Heart right ventricle (tissue), 16 donors: ENCODE measurements at regions of chr1 and their contacts with region 1.

Region 1: DNA sequence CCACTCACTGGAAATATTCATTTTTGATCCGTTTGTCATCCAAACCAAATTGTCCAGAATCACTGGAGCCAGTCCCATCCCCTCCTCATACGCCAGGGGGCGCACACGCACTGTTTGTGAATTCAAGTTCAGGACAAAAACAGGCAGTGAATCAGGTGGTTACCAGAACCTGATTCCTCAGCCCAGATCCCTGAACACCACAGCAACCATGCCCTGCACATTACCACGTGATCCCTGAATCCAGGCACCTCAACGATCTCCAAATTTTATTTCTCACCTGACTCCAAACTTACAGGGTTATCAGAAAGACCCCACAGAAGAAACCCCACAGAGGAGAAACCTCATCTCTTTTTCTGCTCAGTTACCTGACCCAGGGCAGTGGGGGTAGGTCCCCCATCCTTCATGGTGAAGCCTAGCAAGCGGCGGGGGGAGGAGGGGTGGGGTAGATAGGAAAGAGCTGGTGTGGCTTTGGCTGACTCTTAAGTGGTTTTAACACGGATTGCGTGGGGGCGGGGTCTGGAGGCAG is 1.4 kb upstream of the PTPRF start:
- DNase-seq: peak; percentile 80 to 82
- ATAC-seq: peak; percentile 41 to 85 (median 74)
- H3K4me3 ChIP-seq: no peak overlapping the region
- H3K27ac ChIP-seq: no peak overlapping the region
- H3K4me1 ChIP-seq: peaks cover 0 to 20% (median 11%) of the 10 kb centered on the region in 9 donors
- H3K27me3 ChIP-seq: peaks cover 0 to 38% (median 9%) of the 10 kb centered on the region in 7 donors
- CTCF ChIP-seq: peak; percentile 87 to 96 (median 94)

Region 2: GRCh38 chr1:43454266-43455011 is 74.8 kb before region 1 on chr1:
- intact Hi-C with region 1: no loop called
- DNase-seq: peak; percentile 56 to 80
- ATAC-seq: peak; percentile 79 to 92 (median 88)
- H3K4me3 ChIP-seq: peak overlapping the region; percentile 42 to 67 (median 58)
- H3K27ac ChIP-seq: peak overlapping the region; percentile 86 to 94 (median 90)
- H3K4me1 ChIP-seq: peaks cover 0 to 26% (median 16%) of the 10 kb centered on the region in 9 donors
- H3K27me3 ChIP-seq: no peaks in the 10 kb centered on the region
- CTCF ChIP-seq: peak in 2 of 9 donors; percentile 7 to 10

Region 3: DNA sequence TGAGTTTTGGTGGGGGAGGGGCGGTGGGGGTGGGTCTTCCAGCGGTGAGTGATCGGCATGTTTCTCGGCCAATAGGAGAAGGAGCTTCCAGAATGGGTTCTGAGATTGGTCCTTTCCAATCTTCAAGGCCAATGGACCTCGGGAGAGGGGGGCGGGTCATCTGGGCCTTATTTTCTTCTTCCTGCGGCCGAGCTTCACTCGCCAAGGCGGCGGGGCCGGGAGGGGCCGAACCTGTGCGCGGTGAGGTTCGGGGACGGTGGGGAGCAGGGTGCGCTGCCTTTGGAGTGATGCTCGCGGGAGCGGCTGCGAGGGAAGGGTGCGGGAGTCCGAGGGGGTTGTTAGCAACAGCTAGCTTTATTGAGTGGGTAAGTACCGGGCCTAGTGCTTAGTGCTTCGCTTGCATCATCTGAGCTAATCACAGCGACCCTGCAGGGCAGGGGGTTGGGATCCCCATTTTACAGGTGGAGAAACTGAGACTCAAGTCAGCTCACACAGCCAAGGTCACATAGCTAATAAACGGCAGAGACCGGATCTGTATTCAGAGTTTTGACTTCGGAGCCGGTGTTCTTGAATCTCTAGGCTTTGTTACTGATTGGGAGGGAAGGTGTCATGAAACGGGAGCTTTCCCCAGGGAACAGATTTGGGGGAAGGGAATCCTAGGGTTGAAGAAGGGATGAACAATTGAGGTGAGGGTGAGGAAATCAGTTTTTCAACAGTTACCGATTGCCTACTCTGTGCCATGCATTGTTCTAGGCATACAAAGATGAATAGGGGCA is 121.2 kb after region 1 on chr1:
- intact Hi-C with region 1: loop called (anchors 1 to 10 kb)
- DNase-seq: peak; percentile 88 to 99
- ATAC-seq: peak; percentile 88 to 94 (median 92)
- H3K4me3 ChIP-seq: peak overlapping the region; percentile 46 to 93 (median 78)
- H3K27ac ChIP-seq: peak overlapping the region; percentile 69 to 95 (median 90)
- H3K4me1 ChIP-seq: peaks cover 9 to 40% (median 19%) of the 10 kb centered on the region in 9 donors
- H3K27me3 ChIP-seq: peaks cover 0 to 1% (median 0%) of the 10 kb centered on the region in 7 donors
- CTCF ChIP-seq: no peak

Region 4: DNA sequence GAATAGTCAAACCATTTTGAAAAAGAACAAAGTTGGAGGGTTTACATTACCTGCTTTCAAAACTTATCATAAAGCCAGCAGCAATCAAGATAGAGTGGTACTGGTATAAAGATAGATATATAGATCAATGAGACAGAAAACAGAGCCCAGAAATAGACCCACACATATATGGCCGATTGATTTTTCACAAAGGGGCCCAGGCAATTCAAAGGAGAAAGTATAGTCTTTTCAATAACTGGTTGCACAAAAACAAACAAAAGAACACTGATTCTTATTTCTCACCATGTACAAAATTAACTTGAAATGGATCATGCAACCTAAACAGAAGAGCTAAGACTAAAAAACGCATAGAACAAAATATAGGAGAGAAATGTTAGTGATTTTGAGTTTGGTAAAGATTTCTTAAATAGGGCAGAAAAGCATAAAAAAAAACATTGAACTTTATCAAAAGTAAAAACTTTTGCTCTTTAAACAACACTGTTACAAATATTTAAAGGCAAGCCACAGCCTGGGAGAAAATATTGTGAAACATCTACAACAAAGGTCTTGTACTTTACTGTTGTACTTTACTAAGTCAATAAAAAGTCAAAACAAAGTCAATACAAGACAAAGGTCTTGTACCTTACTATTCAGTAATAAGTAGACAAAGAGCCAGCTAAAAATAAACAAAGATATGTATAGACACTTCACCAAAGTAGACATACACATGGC is 228.2 kb after region 1 on chr1:
- intact Hi-C with region 1: loop called in 3 of 10 experiments (anchors 5 to 10 kb)
- DNase-seq: no peak
- ATAC-seq: no peak
- H3K4me3 ChIP-seq: no peak overlapping the region
- H3K27ac ChIP-seq: no peak overlapping the region
- H3K4me1 ChIP-seq: peaks cover 0 to 5% (median 0%) of the 10 kb centered on the region in 9 donors
- H3K27me3 ChIP-seq: no peaks in the 10 kb centered on the region
- CTCF ChIP-seq: no peak

Region 5: GRCh38 chr1:43934101-43934985 is 405.1 kb after region 1 on chr1:
- intact Hi-C with region 1: loop called in 8 of 10 experiments (anchors 2 to 10 kb)
- DNase-seq: peak; percentile 44 to 55
- ATAC-seq: peak in 7 of 8 donors; percentile 46 to 75 (median 62)
- H3K4me3 ChIP-seq: peak overlapping the region in 4 of 10 donors; percentile 36 to 44 (median 42)
- H3K27ac ChIP-seq: peak overlapping the region in 1 of 10 donors; percentile 9
- H3K4me1 ChIP-seq: peaks cover 6 to 40% (median 23%) of the 10 kb centered on the region in 9 donors
- H3K27me3 ChIP-seq: peaks cover 0 to 41% (median 26%) of the 10 kb centered on the region in 7 donors
- CTCF ChIP-seq: peak; percentile 72 to 87 (median 78)

Region 6: GRCh38 chr1:44036409-44037139 is 507.3 kb after region 1 on chr1:
- intact Hi-C with region 1: loop called in 3 of 10 experiments (anchors 5 to 10 kb)
- DNase-seq: peak; percentile 44 to 60
- ATAC-seq: peak; percentile 53 to 76 (median 66)
- H3K4me3 ChIP-seq: no peak overlapping the region
- H3K27ac ChIP-seq: peak overlapping the region in 9 of 10 donors; percentile 3 to 74 (median 46)
- H3K4me1 ChIP-seq: peaks cover 6 to 38% (median 23%) of the 10 kb centered on the region in 9 donors
- H3K27me3 ChIP-seq: peaks cover 0 to 5% (median 0%) of the 10 kb centered on the region in 7 donors
- CTCF ChIP-seq: peak; percentile 50 to 88 (median 79)

Region 7: GRCh38 chr1:44049839-44050238 is 520.6 kb after region 1 on chr1:
- intact Hi-C with region 1: loop called in 6 of 10 experiments (anchors 5 to 10 kb)
- DNase-seq: no peak
- ATAC-seq: no peak
- H3K4me3 ChIP-seq: no peak overlapping the region
- H3K27ac ChIP-seq: peak overlapping the region in 1 of 10 donors; percentile 67
- H3K4me1 ChIP-seq: peaks cover 0 to 32% (median 0%) of the 10 kb centered on the region in 9 donors
- H3K27me3 ChIP-seq: no peaks in the 10 kb centered on the region
- CTCF ChIP-seq: no peak